GM13976 (cell line): ENCODE measurements at regions of chr9 and their contacts with region 1.

Region 1: DNA sequence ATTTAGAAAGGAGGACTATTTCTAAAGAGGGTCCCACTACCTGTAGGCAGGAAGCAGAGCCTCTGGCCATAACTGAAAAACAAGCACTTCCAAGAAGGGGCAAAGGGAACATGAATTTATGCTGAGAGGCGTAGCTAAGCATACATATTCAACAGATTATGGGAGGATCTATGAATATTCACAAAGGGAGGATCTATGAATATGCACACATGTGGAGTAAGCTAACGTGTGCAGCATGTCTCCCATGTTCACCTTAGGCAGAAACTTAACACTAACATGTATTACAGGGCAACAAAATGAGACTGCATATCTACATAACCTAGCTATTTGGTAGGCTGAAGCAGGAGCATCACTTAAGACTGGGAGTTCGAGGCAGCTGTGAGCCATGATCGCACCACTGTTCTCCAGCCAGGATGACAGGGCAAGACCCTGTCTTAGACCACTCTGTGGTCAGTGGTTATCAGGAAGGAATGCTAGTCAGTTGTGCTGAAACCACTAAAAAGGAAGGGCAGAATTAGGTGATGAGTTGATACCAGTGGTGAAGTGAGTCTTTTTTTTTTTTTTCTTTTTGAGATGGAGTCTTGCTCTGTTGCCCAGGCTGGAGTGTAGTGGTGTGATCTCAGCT is 20.8 kb downstream of the FXN start:
- DNase-seq: no peak
- CTCF ChIP-seq: no peak

Region 2: DNA sequence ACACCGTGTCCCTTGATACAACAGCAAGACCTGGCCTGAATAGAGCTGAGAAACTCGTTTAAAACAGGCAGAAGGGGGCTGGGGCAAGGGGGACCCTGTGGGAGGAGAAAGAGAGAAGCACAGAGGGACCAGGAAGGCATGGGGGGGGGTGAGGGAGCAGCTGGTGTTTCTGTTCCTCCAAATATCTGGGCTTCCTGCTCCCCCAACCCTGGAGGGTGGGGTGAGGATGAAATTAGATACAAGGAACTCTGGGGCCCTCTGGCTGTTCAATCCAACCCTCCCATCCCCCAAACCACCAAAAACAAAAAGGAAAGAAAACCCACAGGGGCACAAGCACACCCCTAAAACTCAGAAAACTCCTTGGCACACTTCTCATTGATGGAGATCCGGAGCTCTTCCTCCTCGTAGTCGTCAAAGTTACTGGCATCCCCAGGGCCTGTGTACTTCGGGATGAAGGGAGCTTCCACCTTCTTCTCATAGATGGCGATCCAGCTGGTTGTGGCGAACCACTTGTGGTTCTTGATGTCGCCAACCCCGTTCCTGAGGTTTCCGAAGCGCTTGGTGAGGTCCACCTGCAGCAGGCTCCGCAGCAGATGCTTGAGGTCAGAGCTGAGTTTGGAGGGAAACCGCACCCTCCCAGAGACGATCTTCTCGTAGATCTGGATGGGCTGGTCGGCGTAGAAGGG is 43.5 kb before region 1 on chr9:
- in situ Hi-C with region 1: no loop called
- DNase-seq: peak; percentile 45
- CTCF ChIP-seq: no peak

Region 3: DNA sequence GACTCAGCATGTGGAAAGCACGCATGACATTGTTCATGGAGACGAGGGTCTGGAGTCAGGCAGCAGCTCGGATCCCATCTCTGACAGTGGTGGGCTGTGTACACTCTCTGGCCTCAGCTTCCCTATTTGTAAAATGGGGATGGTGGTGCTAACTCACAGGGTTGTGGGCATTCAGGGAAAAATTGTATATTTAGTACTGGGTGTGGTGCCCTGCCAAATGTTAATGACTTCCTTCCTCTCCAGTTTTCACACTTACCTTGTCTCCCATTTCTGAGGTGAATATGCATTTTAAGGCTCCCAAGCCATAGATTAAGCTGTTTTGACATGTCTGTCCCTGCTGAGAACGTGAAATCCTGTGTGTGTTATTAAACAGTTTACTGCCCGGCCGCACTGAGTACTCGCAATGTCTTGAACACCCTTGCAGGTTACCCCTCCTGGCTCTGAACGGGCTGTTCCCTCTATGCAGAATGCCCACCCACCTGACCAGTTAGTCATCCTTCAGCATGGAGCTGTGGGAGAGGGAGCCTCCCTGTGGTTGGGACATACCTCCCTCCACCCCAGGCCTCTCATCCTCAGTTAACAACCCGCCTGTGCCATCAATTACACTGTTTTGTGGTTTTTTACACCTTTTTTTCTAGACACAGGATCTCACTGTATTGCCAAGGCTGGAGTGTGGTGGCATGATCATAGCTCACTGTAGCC is 143.6 kb after region 1 on chr9:
- in situ Hi-C with region 1: loop called (anchors 10 kb)
- DNase-seq: no peak
- CTCF ChIP-seq: no peak

Region 4: DNA sequence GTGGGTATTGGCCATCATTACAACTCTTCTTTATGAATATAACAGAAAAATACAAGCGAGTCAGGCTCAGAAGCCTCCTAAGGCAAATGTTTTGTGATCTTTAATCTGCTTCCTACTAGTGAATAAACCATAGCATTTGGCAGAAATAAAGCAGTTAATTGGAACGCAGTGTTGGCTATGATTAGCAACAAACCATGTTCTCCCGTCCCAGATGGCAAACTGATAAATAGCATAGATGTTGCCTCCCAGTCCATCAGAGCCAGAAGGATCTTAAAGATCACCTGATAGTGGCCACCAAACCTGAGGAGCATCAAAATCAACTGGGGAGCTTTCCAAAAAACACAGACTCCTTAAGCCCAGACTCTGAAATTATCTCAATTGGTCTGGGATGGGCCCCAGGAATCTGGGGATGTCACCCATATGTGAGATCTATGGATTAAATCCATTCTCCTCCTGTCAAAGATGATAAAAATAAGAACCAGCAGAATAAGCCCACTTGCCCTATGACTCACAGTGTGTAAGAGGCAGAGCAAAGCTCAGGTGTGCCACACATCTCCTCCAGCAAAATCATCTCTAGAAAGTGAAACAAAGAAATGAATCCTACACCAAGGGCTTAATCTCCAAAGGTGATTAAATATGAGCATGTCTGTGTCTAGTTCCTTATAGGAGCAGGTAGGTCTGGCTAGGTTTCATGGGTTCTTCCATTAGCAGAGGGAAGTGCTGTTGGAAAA is 565.6 kb after region 1 on chr9:
- in situ Hi-C with region 1: no loop called
- DNase-seq: no peak
- CTCF ChIP-seq: no peak